Transverse colon (tissue), 4 donors: ENCODE measurements at regions of chr17 and their contacts with region 1.

Region 1: GRCh38 chr17:50956750-50957523 is 90.8 kb upstream of the TOB1 start:
- DNase-seq: peak; percentile 68
- H3K4me3 ChIP-seq: no peak overlapping the region
- H3K27ac ChIP-seq: peak overlapping the region in 3 of 4 donors; percentile 45 to 70 (median 57)
- H3K4me1 ChIP-seq: peaks cover 7 to 28% (median 25%) of the 10 kb centered on the region in 4 donors
- H3K27me3 ChIP-seq: no peaks in the 10 kb centered on the region
- CTCF ChIP-seq: peak; percentile 60 to 83 (median 73)
- EP300 ChIP-seq: no peak
- POLR2A ChIP-seq: no peak

Region 2: DNA sequence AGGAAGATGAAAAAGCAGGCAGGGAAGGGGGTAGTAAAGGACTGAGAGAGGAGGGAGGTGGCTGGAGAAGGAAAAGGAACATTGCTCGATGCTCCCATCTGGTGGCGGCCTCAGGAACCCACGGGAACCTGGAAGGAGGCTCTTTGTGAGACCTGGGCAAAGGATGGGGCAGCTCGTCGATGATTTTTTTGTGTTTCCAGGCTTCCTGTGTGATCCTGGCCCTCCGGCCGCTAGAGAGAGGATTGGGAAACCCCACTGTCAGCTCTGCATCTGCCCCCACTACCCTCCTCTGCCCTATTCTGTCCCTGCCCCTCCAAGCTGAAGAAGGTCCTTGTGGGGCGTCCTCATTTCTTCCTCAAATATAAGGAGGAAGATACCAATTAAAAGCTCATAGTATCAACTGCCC is 115.0 kb before region 1 on chr17:
- in situ Hi-C with region 1: no loop called
- intact Hi-C with region 1: no loop called
- DNase-seq: peak; percentile 82
- H3K4me3 ChIP-seq: no peak overlapping the region
- H3K27ac ChIP-seq: no peak overlapping the region
- H3K4me1 ChIP-seq: no peaks in the 10 kb centered on the region
- H3K27me3 ChIP-seq: no peaks in the 10 kb centered on the region
- CTCF ChIP-seq: peak; percentile 70 to 90 (median 80)
- EP300 ChIP-seq: no peak
- POLR2A ChIP-seq: no peak

Region 3: GRCh38 chr17:50853015-50853615 is 103.8 kb before region 1 on chr17:
- in situ Hi-C with region 1: loop called (anchors 5 kb)
- intact Hi-C with region 1: loop called (anchors 1 kb)
- DNase-seq: no peak
- H3K4me3 ChIP-seq: no peak overlapping the region
- H3K27ac ChIP-seq: peak overlapping the region; percentile 66 to 85 (median 82)
- H3K4me1 ChIP-seq: peaks cover 14 to 54% (median 26%) of the 10 kb centered on the region in 4 donors
- H3K27me3 ChIP-seq: no peaks in the 10 kb centered on the region
- CTCF ChIP-seq: no peak
- EP300 ChIP-seq: no peak
- POLR2A ChIP-seq: no peak